B cell (primary cell): ENCODE measurements at regions of chr19 and their contacts with region 1.

Region 1: GRCh38 chr19:19063183-19064097 is at the start of gene SLC25A42:
- DNase-seq: peak; percentile 100
- ATAC-seq: peak; percentile 89
- H3K4me3 ChIP-seq: peak within 1 kb of the TSS; percentile 78 to 97 (median 84)
- H3K4me3 Mint-ChIP-seq: peak within 1 kb of the TSS; percentile 91
- H3K27ac ChIP-seq: peak within 1 kb of the TSS; percentile 71 to 83
- H3K27ac Mint-ChIP-seq: peak within 1 kb of the TSS; percentile 92
- H3K4me1 ChIP-seq: peaks cover 31 to 40% of the 10 kb centered on the region in 2 donors
- H3K4me1 Mint-ChIP-seq: peaks cover 39% of the 10 kb centered on the region
- H3K27me3 ChIP-seq: no peaks in the 10 kb centered on the region
- H3K27me3 Mint-ChIP-seq: no peaks in the 10 kb centered on the region
- CTCF ChIP-seq: no peak
- total RNA-seq, gene SLC25A42: 36.5 and 38.8 TPM in 2 replicates

Region 2: DNA sequence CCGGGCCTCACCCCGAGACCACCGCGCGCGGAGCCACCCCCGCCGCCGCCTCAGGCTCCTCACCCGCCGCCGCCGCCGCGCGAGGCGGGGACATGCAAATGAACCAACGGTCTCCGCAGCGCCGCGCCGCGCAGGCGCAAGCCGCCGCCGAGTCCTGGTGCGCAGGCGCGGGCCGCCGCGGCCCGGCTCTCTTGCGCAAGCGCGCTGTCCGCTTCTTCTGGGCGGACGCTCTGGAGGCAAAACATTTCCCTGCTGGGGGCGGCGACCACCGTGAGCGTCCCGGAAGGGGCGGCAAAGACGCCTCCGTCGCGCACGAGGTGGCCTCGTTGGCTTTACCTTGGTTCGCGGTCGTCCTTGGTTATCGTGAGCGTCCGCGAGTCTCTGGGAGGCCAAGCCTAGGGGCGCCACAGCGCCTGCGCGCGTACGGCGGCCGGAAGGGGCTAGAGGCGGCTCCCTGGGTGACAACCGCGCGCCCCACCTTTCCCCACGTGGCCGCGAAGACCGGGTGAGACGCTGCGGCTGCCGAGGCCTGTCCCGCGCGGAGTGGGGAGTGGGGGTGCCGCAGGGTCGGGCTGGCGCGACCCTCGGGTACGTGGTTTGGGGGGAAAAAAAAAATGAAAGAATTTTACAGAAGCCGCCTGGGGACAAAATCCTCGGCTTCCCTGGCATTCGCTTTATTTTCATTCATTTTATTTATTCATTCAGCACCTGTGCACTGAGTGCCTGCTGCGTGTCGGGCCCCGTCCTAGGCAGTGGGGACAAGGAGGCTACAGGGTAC is 29.8 kb before region 1 on chr19 and contains the starts of genes ARMC6 and SUGP2:
- CTCF ChIA-PET with region 1: no interaction called
- POLR2A ChIA-PET with region 1: no interaction called
- intact Hi-C with region 1: loop called (anchors 1 kb)
- DNase-seq: peak; percentile 98
- ATAC-seq: peak; percentile 82
- H3K4me3 ChIP-seq: peak within 1 kb of the TSS; percentile 68 to 84 (median 74)
- H3K4me3 Mint-ChIP-seq: peak within 1 kb of the TSS; percentile 96
- H3K27ac ChIP-seq: peak within 1 kb of the TSS; percentile 65 to 76
- H3K27ac Mint-ChIP-seq: peak within 1 kb of the TSS; percentile 93
- H3K4me1 ChIP-seq: peaks cover 18 to 24% of the 10 kb centered on the region in 2 donors
- H3K4me1 Mint-ChIP-seq: peaks cover 26% of the 10 kb centered on the region
- H3K27me3 ChIP-seq: no peaks in the 10 kb centered on the region
- H3K27me3 Mint-ChIP-seq: no peaks in the 10 kb centered on the region
- CTCF ChIP-seq: no peak
- total RNA-seq, gene ARMC6: 15.2 TPM in 2 replicates
- total RNA-seq, gene SUGP2: 154 and 164 TPM in 2 replicates

Region 3: DNA sequence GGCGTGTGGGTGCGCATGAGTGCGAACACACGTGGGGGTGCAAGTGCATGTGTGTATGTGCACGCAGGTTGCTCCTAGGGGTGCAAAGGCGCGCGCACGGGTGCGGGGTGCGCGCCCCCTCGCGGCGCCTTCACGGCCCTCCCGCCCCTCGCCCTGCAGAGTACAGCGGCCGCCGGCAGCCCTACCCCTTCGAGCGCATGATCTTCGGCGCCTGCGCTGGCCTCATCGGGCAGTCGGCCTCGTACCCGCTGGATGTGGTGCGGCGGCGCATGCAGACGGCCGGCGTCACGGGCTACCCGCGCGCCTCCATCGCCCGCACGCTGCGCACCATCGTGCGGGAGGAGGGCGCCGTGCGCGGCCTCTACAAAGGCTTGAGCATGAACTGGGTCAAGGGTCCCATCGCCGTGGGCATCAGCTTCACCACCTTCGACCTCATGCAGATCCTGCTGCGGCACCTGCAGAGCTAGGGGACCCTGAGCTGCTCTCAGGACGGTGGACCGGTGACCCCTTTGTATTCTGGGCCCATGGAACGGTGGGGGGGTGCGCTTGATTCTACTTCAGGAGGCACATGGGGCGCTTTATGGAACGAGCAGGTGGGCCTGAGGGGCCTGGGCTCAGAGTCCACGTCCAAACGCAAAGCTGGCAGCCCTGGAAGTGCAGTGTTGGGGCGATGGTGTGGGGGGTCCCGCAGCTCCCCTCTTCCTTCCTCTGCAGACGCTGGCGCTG is 47.1 kb after region 1 on chr19:
- CTCF ChIA-PET with region 1: interaction called, 7 read pairs
- POLR2A ChIA-PET with region 1: interaction called, 5 read pairs
- intact Hi-C with region 1: loop called (anchors 1 kb)
- DNase-seq: peak; percentile 53
- ATAC-seq: peak; percentile 52
- H3K4me3 ChIP-seq: no peak overlapping the region
- H3K4me3 Mint-ChIP-seq: peak overlapping the region; percentile 34
- H3K27ac ChIP-seq: no peak overlapping the region
- H3K27ac Mint-ChIP-seq: no peak overlapping the region
- H3K4me1 ChIP-seq: peaks cover 0 to 15% of the 10 kb centered on the region in 2 donors
- H3K4me1 Mint-ChIP-seq: peaks cover 24% of the 10 kb centered on the region
- H3K27me3 ChIP-seq: no peaks in the 10 kb centered on the region
- H3K27me3 Mint-ChIP-seq: no peaks in the 10 kb centered on the region
- CTCF ChIP-seq: peak; percentile 47

Region 4: GRCh38 chr19:19138169-19138981 is 74.9 kb after region 1 on chr19 and contains the start of gene TMEM161A:
- CTCF ChIA-PET with region 1: interaction called, 3 read pairs
- POLR2A ChIA-PET with region 1: interaction called, 3 read pairs
- intact Hi-C with region 1: loop called (anchors 1 kb)
- DNase-seq: peak; percentile 96
- ATAC-seq: peak; percentile 100
- H3K4me3 ChIP-seq: peak within 1 kb of the TSS; percentile 78 to 90 (median 86)
- H3K4me3 Mint-ChIP-seq: peak within 1 kb of the TSS; percentile 97
- H3K27ac ChIP-seq: peak within 1 kb of the TSS; percentile 29 to 70
- H3K27ac Mint-ChIP-seq: peak within 1 kb of the TSS; percentile 93
- H3K4me1 ChIP-seq: peaks cover 15 to 26% of the 10 kb centered on the region in 2 donors
- H3K4me1 Mint-ChIP-seq: peaks cover 41% of the 10 kb centered on the region
- H3K27me3 ChIP-seq: no peaks in the 10 kb centered on the region
- H3K27me3 Mint-ChIP-seq: no peaks in the 10 kb centered on the region
- CTCF ChIP-seq: no peak
- total RNA-seq, gene TMEM161A: 23.2 and 23.6 TPM in 2 replicates